MCF 10A (cell line): ENCODE measurements at regions of chr6 and their contacts with region 1.

Region 1: GRCh38 chr6:31068669-31069340 is 43.6 kb downstream of the C6orf15 start:
- DNase-seq: peak; percentile 82
- H3K4me3 Mint-ChIP-seq: no peak overlapping the region
- H3K27ac Mint-ChIP-seq: no peak overlapping the region
- H3K4me1 Mint-ChIP-seq: peaks cover 5% of the 10 kb centered on the region
- H3K27me3 Mint-ChIP-seq: no peaks in the 10 kb centered on the region
- CTCF ChIP-seq: peak; percentile 81

Region 2: DNA sequence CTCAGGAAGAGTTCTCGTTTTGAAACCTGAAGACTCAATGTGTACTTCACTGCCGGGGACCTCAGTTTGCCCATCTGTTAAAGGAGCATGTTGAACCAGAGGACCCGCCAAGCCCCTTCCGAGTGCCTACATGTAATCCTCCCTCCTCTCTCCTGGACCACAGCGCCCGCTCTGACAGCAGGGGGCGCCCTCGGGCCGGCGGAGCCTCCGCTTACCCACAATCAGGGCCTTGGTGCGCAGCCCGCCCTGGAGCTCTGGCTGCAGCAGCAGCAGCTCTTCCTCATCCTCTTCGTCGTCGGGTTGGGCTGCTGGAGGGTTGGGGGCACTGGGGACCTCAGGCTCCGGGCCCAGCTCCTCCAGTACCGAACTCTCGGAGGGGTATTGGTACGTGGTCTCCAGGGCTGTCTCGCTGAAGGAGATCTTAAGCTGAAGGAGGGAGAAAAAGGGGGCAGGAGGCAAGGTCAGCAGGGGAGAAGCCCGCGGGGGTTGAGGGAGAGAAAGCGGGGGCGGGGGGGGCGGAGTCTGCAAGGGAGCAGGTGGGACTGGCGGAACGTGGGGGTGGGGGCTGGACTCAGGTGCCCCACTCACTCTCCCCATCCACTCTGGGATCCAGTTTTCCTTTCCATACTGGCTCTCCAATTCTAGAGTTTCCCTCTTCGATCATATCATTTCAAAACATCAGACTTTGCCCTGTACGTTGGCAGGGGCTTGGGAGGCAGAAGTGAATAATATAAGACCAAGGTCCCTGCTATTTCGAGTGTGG is 389.7 kb before region 1 on chr6:
- CTCF ChIA-PET with region 1: no interaction called
- POLR2A ChIA-PET with region 1: no interaction called
- intact Hi-C with region 1: loop called (anchors 1 kb)
- DNase-seq: peak; percentile 82
- H3K4me3 Mint-ChIP-seq: peak overlapping the region; percentile 41
- H3K27ac Mint-ChIP-seq: no peak overlapping the region
- H3K4me1 Mint-ChIP-seq: peaks cover 28% of the 10 kb centered on the region
- H3K27me3 Mint-ChIP-seq: no peaks in the 10 kb centered on the region
- CTCF ChIP-seq: peak; percentile 98

Region 3: DNA sequence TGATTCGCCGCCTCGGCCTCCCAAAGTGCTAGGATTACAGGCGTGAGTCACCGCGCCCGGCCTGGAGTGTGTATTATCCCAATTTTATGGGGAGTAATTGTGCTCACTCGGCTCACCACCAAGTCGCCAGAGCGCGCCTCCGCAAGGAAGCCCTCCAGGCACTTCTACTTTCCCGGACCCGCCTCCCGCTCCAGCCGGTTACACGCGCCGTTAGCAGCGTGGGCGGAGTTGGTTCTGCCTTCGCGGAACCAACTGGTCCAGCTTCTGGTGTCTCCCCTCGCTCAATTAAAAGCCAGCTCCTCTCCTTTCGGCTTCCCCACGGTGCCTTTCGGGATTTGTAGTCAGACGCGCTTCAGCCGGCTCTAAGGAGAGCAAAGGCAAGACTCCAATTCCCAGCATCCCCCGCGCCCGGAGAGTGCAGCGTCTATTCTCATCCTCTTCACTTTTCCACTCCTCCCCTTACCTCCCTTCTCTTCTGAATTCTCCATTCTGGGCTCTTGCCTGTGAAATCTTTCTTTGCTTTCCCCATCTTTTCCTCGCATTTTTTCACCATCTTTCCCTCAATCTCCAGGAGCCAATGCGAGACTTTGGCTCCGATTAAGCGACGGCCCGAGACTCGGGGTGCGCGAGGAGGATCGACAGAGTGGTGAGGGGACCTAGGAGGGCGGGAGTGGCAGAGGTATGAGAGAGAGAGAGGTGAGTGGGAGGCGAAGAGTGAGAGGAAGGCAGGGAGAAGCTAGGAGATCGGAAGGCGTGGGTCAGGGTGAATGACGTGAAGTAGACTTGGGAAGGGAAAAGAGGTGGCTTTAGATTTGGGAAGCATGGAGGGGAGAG is 160.8 kb before region 1 on chr6 and contains the start of gene GTF2H4:
- CTCF ChIA-PET with region 1: interaction called, 749 read pairs
- POLR2A ChIA-PET with region 1: interaction called, 81 read pairs
- intact Hi-C with region 1: no loop called
- DNase-seq: peak; percentile 100
- H3K4me3 Mint-ChIP-seq: peak within 1 kb of the TSS; percentile 96
- H3K27ac Mint-ChIP-seq: peak within 1 kb of the TSS; percentile 57
- H3K4me1 Mint-ChIP-seq: peaks cover 16% of the 10 kb centered on the region
- H3K27me3 Mint-ChIP-seq: no peaks in the 10 kb centered on the region
- CTCF ChIP-seq: no peak
- total RNA-seq, gene GTF2H4: 30.6 and 33.9 TPM in 2 replicates

Region 4: GRCh38 chr6:30942338-30943060 is 126.3 kb before region 1 on chr6:
- CTCF ChIA-PET with region 1: interaction called, 38 read pairs
- POLR2A ChIA-PET with region 1: interaction called, 4 read pairs
- intact Hi-C with region 1: loop called (anchors 1 kb)
- DNase-seq: peak; percentile 88
- H3K4me3 Mint-ChIP-seq: peak overlapping the region; percentile 54
- H3K27ac Mint-ChIP-seq: peak overlapping the region; percentile 43
- H3K4me1 Mint-ChIP-seq: peaks cover 29% of the 10 kb centered on the region
- H3K27me3 Mint-ChIP-seq: no peaks in the 10 kb centered on the region
- CTCF ChIP-seq: peak; percentile 50

Region 5: DNA sequence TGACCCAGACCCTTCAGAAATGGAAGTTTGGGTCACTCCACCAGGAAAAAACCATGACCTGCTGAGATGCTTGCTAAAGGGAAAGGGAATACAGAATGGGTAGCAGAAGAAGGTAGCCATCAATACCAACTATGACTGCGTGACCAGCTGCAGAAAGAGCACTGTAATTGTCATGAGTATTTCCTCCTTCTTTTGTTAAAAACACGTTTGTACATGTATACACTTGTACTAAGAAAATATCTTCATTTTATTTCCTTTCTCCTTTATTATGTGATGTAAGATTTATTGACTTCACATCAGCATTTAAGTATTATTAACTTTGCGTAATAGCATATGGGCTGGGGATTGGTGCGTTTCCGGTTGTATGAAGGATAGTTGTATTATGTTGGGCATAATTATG is 97.9 kb before region 1 on chr6:
- CTCF ChIA-PET with region 1: no interaction called
- POLR2A ChIA-PET with region 1: no interaction called
- intact Hi-C with region 1: no loop called
- DNase-seq: no peak
- H3K4me3 Mint-ChIP-seq: no peak overlapping the region
- H3K27ac Mint-ChIP-seq: no peak overlapping the region
- H3K4me1 Mint-ChIP-seq: no peaks in the 10 kb centered on the region
- H3K27me3 Mint-ChIP-seq: no peaks in the 10 kb centered on the region
- CTCF ChIP-seq: no peak

Region 6: GRCh38 chr6:31079656-31080261 is 11.0 kb after region 1 on chr6:
- CTCF ChIA-PET with region 1: interaction called, 44 read pairs
- POLR2A ChIA-PET with region 1: interaction called, 12 read pairs
- intact Hi-C with region 1: no loop called
- DNase-seq: peak; percentile 69
- H3K4me3 Mint-ChIP-seq: no peak overlapping the region
- H3K27ac Mint-ChIP-seq: no peak overlapping the region
- H3K4me1 Mint-ChIP-seq: peaks cover 16% of the 10 kb centered on the region
- H3K27me3 Mint-ChIP-seq: no peaks in the 10 kb centered on the region
- CTCF ChIP-seq: peak; percentile 62

Region 7: DNA sequence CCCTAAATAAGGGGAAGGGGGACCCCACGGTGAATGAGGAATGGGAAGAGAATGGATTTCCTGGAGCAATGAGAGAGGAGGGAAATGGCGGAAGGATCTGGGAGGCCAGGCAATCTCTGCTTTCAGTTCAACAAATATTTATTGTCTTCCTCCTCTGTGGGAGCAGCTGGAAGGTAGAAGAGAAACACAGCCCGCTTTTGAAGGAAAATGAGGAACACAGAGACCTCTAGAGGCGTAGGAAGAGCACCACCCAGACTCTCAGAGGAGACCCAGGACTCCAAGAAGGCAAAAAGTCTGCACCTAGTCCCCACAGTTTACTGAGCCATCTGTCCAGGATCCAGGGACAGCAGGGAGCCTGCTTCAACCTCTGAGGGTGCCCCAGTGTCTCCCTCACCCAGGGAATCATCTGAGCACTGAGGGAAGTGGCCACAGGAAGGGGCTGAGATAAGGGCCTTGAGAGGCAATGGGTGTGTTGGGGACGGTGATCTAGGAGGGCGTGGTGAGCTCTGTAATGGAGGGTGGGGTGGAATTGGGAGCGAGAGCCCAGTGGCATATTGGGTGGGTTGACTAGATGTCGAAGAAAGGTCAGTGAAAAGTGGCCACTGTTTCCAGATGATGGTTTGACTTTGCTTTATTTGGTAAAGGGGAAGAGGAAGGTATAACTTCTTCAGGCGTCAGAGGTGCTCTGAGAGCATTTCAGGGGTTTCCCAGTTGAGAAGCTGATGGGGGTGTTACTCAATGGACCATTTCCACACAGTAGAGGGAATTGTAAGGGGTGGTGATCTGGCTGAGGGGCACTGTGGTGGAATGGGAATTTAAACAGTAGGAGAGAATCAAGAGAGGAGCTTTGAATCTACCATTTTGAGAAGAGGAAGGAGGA is 46.4 kb after region 1 on chr6:
- CTCF ChIA-PET with region 1: interaction called, 8 read pairs
- POLR2A ChIA-PET with region 1: interaction called, 8 read pairs
- intact Hi-C with region 1: loop called (anchors 1 kb)
- DNase-seq: peak; percentile 81
- H3K4me3 Mint-ChIP-seq: peak overlapping the region; percentile 79
- H3K27ac Mint-ChIP-seq: peak overlapping the region; percentile 98
- H3K4me1 Mint-ChIP-seq: peaks cover 21% of the 10 kb centered on the region
- H3K27me3 Mint-ChIP-seq: no peaks in the 10 kb centered on the region
- CTCF ChIP-seq: peak; percentile 33